ENCODE measurements at regions of chr9 and their contacts with region 1.

Region 1: DNA sequence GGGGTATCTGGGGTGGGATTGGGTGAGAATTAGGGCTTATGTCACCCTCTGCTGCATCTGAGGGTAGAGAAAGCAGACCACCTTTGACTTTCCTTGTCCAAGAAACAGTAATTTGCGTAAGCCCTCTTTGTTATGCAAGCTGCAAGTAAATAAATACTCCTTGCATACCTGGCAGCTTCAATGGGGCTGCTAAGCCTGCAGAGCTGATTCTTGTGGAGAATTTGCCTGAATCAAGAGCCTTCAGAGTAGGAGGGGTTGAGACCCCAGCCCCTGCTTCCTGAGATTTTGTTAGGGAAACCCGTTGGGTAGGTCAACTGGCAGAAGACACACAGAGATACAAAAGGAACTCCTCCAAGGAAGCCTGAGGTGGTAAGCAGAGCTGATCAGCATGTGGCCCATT is 515.1 kb downstream of the DMAC1 start:
- DNase-seq: no peak
- ATAC-seq: no peak
- H3K4me3 Mint-ChIP-seq: no peak overlapping the region
- H3K27ac Mint-ChIP-seq: no peak overlapping the region
- H3K4me1 Mint-ChIP-seq: peaks cover 11% of the 10 kb centered on the region
- H3K27me3 Mint-ChIP-seq: peaks cover 33% of the 10 kb centered on the region
- CTCF ChIP-seq: no peak

Region 2: GRCh38 chr9:7146574-7146973 is 137.9 kb before region 1 on chr9:
- CTCF ChIA-PET with region 1: no interaction called
- POLR2A ChIA-PET with region 1: no interaction called
- intact Hi-C with region 1: no loop called
- DNase-seq: no peak
- ATAC-seq: no peak
- H3K4me3 Mint-ChIP-seq: no peak overlapping the region
- H3K27ac Mint-ChIP-seq: no peak overlapping the region
- H3K4me1 Mint-ChIP-seq: peaks cover 26% of the 10 kb centered on the region
- H3K27me3 Mint-ChIP-seq: no peaks in the 10 kb centered on the region
- CTCF ChIP-seq: no peak

Region 3: GRCh38 chr9:7298123-7298522 is 13.6 kb after region 1 on chr9:
- CTCF ChIA-PET with region 1: interaction called, 3 read pairs
- POLR2A ChIA-PET with region 1: no interaction called
- intact Hi-C with region 1: loop called (anchors 1 kb)
- DNase-seq: peak; percentile 86
- ATAC-seq: peak; percentile 90
- H3K4me3 Mint-ChIP-seq: peak overlapping the region; percentile 23
- H3K27ac Mint-ChIP-seq: peak overlapping the region; percentile 87
- H3K4me1 Mint-ChIP-seq: peaks cover 26% of the 10 kb centered on the region
- H3K27me3 Mint-ChIP-seq: peaks cover 24% of the 10 kb centered on the region
- CTCF ChIP-seq: no peak